ENCODE measurements at regions of chr6 and their contacts with region 1.

Region 1: GRCh38 chr6:149431905-149432775 is 32.1 kb downstream of the SUMO4 start:
- DNase-seq: peak; percentile 89 to 92 (median 92)
- ATAC-seq: peak; percentile 97
- H3K4me3 ChIP-seq: no peak overlapping the region
- H3K27ac ChIP-seq: no peak overlapping the region
- H3K4me1 ChIP-seq: no peaks in the 10 kb centered on the region; a peak in 1 of 5 replicates
- H3K27me3 ChIP-seq: peaks cover 22 to 52% of the 10 kb centered on the region in 2 experiments
- CTCF ChIP-seq: peak; percentile 96 to 98 (median 97)
- EP300 ChIP-seq: 0 out of 2 replicates have a peak, but pooled peaks have one; percentile 13
- POLR2A ChIP-seq: no peak
- RAD21 ChIP-seq: peak; percentile 99 to 100

Region 2: DNA sequence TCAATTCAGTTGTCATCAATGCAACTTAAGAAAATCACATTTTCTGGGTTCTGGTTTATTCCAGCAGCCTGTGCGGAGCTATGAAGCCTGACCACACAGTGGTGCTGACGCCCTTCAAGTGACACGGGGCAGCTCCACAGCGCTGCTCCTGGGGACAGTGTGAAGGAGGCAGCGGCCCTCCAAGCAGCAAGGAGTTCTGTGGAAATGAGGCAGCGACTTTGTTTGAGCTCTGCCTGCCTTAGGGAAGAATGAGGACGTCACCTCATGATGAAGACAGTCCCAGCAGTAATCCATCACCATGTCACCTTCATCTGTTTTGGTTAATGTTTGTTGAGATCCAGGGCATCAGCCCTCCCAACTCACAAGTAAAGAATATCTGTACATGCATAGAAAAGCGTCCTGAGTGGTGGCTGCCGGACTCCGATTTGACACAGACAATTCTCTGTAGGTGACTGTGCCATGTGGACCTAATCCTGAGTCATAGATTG is 853.9 kb before region 1 on chr6:
- CTCF ChIA-PET with region 1: no interaction called
- POLR2A ChIA-PET with region 1: no interaction called
- in situ Hi-C with region 1: loop called (anchors 25 kb)
- intact Hi-C with region 1: loop called (anchors 1 kb)
- DNase-seq: peak; percentile 19 to 78 (median 50)
- ATAC-seq: peak; percentile 100
- H3K4me3 ChIP-seq: no peak overlapping the region
- H3K27ac ChIP-seq: no peak overlapping the region
- H3K4me1 ChIP-seq: no peaks in the 10 kb centered on the region
- H3K27me3 ChIP-seq: peaks cover 2 to 9% of the 10 kb centered on the region in 2 experiments; a peak in 4 of 5 replicates
- CTCF ChIP-seq: peak; percentile 96 to 100 (median 100)
- EP300 ChIP-seq: no peak
- POLR2A ChIP-seq: no peak
- RAD21 ChIP-seq: peak; percentile 81 to 88

Region 3: DNA sequence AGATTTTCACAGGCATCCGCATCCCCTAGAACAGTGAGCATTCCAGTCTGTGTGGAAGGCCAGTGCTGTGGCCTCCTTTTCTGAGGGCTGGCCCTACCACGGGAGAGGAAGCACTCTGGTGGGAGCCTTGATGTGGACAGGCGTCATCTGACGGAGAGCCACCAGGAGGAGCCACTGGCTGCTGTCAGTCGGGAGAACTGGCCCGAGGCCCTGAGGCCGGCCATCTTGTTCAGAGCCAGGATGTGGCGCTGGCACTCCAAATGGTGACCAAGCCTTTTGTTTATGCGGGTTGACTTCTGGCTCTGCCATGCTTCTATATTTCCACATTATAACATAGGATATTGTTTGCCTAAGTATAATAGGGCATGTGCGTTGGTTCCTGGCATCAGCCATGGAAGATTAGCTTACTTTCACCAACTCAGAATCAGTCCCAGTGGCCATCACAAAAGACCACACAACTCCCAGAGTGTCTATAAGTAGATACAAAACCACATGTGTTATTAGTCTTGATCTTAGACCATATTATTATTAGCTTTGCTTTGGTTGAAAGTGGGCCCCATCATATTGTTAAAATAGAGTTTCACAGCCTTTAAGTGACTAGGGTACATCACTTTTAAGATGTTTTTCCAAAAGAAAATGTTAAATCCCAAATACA is 388.5 kb before region 1 on chr6:
- CTCF ChIA-PET with region 1: interaction called, 3 read pairs
- POLR2A ChIA-PET with region 1: no interaction called
- in situ Hi-C with region 1: no loop called
- intact Hi-C with region 1: loop called (anchors 1 kb)
- DNase-seq: peak; percentile 68 to 78 (median 74)
- ATAC-seq: peak; percentile 99
- H3K4me3 ChIP-seq: no peak overlapping the region
- H3K27ac ChIP-seq: no peak overlapping the region
- H3K4me1 ChIP-seq: no peaks in the 10 kb centered on the region
- H3K27me3 ChIP-seq: peaks cover 18 to 26% of the 10 kb centered on the region in 2 experiments; a peak in 4 of 5 replicates
- CTCF ChIP-seq: peak; percentile 80 to 95 (median 87)
- EP300 ChIP-seq: no peak
- POLR2A ChIP-seq: no peak
- RAD21 ChIP-seq: peak; percentile 76 to 91

Region 4: DNA sequence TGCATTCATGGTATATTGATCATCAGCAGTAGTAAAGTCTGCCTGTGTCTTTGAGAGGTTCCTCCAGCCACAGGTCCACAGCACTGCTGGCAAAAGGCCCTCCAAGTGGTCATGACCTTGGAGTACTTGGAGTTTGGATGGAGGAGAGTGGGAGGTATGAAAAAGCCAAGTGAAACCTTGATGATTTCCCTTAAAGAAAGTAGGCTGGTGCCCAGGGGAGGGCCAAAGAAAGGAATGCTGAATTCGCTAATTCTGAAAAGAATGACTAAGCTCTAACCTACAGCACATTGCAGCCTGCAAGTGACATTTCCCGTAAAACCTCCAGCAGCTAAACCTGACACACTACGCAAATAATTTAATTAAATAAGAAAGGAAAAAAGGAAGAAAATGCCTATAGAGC is 338.0 kb before region 1 on chr6:
- CTCF ChIA-PET with region 1: interaction called, 13 read pairs
- POLR2A ChIA-PET with region 1: interaction called, 3 read pairs
- in situ Hi-C with region 1: loop called (anchors 5 kb)
- intact Hi-C with region 1: no loop called
- DNase-seq: no peak
- ATAC-seq: no peak
- H3K4me3 ChIP-seq: no peak overlapping the region
- H3K27ac ChIP-seq: no peak overlapping the region
- H3K4me1 ChIP-seq: no peaks in the 10 kb centered on the region; a peak in 1 of 5 replicates
- H3K27me3 ChIP-seq: no peaks in the 10 kb centered on the region
- CTCF ChIP-seq: no peak
- EP300 ChIP-seq: no peak
- POLR2A ChIP-seq: no peak
- RAD21 ChIP-seq: no peak

Region 5: DNA sequence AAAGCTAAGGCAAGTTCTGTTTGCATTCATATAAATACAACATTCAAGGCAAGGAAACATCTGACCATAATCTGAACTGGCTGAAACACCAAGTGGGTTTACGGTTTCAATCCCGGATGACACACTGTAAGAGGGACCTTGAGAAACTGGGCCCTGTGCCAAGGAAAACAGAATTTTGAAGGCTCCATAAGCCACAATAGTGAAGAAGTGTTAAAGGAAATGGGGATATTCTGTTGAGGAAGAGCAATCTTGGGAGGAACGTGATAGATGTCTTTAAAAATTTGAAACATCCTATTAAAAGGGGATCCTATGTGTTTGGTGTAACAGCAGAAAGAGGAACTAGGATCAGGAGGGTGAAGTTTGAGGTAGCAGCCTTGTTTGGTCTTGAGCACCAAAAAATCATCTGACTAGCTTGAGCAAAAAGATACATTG is 197.0 kb before region 1 on chr6:
- CTCF ChIA-PET with region 1: no interaction called
- POLR2A ChIA-PET with region 1: no interaction called
- in situ Hi-C with region 1: no loop called
- intact Hi-C with region 1: no loop called
- DNase-seq: peak in 1 of 4 experiments; percentile 31
- ATAC-seq: peak; percentile 37; the same call in 1 of the 3 replicates
- H3K4me3 ChIP-seq: no peak overlapping the region
- H3K27ac ChIP-seq: no peak overlapping the region
- H3K4me1 ChIP-seq: peaks cover 4 to 22% of the 10 kb centered on the region in 2 experiments
- H3K27me3 ChIP-seq: peaks cover 0 to 6% of the 10 kb centered on the region in 2 experiments; a peak in 1 of 5 replicates
- CTCF ChIP-seq: no peak
- EP300 ChIP-seq: no peak
- POLR2A ChIP-seq: no peak
- RAD21 ChIP-seq: no peak

Region 6: DNA sequence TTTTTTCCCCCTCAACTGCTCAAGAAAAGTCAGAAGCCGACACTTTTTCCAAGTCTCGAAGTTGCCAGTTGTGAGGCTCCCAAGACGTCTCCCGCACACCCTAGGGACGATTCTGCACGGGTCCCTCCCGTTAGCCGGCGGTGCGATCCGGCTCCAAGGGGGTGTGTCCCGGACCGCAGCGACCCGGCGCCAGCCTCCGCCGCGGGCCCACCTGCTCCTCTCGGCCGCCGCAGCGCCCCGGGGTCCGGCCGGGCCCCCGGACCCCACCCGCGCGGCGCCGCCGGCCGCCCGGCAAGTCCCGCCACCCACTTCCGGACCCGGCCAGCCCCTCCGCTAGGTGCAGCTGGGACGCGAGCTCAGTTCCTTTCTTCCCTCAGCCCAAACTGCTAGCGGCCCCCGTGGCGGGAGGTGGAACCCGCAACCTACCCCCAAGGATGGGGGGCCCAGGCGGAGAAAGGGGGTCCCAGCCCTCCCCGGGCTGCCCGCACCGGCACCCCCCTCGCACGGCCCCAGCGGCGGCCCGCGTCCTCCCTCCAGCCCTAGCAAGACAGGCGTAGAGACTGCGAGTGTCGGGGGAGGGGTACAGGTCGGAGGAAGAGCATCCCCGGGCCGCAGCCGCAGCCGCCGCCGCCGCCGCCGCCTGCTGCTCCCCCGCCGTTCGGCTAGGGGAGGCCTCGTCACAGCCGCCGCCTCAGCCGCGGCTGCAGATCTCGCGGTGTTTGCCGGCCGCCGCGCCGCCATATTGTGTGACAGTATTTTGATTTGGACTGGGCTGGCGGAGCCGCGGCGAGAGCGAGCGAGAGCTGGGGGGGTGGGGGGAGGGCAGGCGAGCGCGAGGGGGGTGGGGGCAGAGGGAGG is 115.1 kb before region 1 on chr6:
- CTCF ChIA-PET with region 1: no interaction called
- POLR2A ChIA-PET with region 1: no interaction called
- in situ Hi-C with region 1: no loop called
- intact Hi-C with region 1: loop called (anchors 5 kb)
- DNase-seq: peak; percentile 89 to 97 (median 90)
- ATAC-seq: peak; percentile 92
- H3K4me3 ChIP-seq: peak overlapping the region; percentile 89
- H3K27ac ChIP-seq: peak overlapping the region; percentile 88
- H3K4me1 ChIP-seq: peaks cover 9 to 12% of the 10 kb centered on the region in 2 experiments
- H3K27me3 ChIP-seq: no peaks in the 10 kb centered on the region
- CTCF ChIP-seq: peak in 2 of 3 experiments; percentile 24 to 29; a peak in 3 of 6 replicates
- EP300 ChIP-seq: peak; percentile 5; the same call in 1 of the 2 replicates
- POLR2A ChIP-seq: peak; percentile 89
- RAD21 ChIP-seq: peak; percentile 31 to 44